ENCODE measurements at regions of chr5 and their contacts with region 1.

Region 1: DNA sequence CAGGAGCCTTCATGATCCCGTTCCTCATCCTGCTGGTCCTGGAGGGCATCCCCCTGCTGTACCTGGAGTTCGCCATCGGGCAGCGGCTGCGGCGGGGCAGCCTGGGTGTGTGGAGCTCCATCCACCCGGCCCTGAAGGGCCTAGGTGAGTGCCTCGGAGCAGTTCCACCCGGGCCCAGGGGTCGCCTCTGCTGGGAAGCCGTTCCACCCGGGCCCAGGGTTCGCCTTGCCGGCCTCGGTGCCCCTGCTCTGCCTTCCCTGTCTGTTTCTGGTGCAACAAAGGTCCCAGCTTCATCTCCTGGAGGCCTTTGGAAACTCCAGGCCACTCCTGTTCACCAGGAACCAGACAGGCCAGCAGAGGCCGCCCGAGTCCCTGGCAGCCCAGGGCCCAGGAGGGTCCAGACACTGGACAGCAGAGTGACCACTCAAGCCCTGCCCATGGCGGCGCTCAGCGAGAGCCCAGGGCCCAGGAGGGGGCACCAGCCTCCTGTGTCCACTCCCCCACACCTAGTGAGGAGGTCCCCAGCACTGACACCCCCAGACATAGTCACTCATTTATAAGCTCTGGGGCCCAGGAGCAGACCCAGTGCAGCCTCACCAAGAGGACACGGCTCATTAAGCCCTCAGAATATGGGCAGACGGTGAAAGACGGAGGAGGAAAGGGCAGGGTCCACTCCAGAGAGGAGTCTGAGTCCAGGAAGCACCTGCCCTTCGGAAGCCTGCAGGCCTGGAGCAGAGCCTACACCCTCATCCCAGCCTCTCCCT is 7.5 kb downstream of the SLC6A19 start:
- DNase-seq: peak; percentile 24
- H3K4me3 ChIP-seq: no peak overlapping the region
- H3K27ac ChIP-seq: no peak overlapping the region
- H3K4me1 ChIP-seq: no peaks in the 10 kb centered on the region
- H3K27me3 ChIP-seq: no peaks in the 10 kb centered on the region
- CTCF ChIP-seq: peak; percentile 18 to 63
- POLR2A ChIP-seq: no peak

Region 2: GRCh38 chr5:1652596-1653345 is 443.8 kb after region 1 on chr5:
- CTCF ChIA-PET with region 1: interaction called, 11 read pairs
- POLR2A ChIA-PET with region 1: no interaction called
- dilution Hi-C with region 1: no loop called
- intact Hi-C with region 1: no loop called
- DNase-seq: no peak
- H3K4me3 ChIP-seq: no peak overlapping the region
- H3K27ac ChIP-seq: no peak overlapping the region
- H3K4me1 ChIP-seq: no peaks in the 10 kb centered on the region
- H3K27me3 ChIP-seq: peaks cover 4 to 12% of the 10 kb centered on the region in 2 experiments
- CTCF ChIP-seq: no peak
- POLR2A ChIP-seq: no peak

Measured in endothelial cell of umbilical vein (primary cell).